ENCODE measurements at regions of chr2 and their contacts with region 1.

Region 1: DNA sequence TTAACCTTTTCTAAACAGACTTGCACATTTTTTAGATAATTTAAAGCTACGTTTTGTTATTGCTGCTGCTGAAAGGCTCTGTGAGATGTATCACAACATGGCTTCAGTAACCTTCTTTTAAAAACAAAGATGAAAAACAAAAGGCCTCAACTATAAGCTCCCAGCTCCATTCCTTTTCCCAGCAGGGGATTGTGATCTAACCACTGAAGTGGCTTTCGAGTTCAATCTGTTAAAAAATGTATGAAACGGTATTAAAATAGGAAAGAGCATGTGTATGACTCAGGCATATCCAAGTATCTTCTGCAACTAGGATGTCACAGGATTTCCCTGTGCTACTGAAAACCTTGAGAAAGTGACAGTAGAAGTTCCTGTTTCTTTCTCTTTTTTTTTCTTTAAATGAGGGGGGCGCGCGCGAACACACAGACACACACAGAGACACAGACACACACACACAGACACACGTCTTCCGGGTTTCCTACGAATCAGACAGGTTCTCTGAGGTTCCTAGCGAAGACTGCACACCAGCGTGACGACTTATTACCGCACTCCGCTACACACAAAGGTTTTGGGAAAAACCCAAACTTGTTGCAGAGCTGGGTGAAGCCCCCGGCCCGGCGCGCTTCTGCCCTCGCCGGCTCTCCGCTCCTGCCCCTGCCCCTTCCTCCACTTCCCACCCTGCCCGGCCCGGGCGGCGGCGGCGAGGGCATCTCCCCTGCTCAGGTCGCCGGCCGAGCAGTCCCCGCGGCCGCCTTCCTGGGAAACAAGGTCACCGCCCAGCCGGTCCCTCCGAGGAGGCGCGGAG is 86.8 kb downstream of the RBMS1 start:
- DNase-seq: peak; percentile 35
- ATAC-seq: peak; percentile 49
- H3K4me3 ChIP-seq: peak overlapping the region; percentile 67 to 87 (median 82)
- H3K27ac ChIP-seq: peak overlapping the region; percentile 17
- H3K4me1 ChIP-seq: peaks cover 56% of the 10 kb centered on the region
- H3K27me3 ChIP-seq: no peaks in the 10 kb centered on the region; a peak in 1 of 5 replicates
- CTCF ChIP-seq: peak; percentile 24; the same call in 1 of the 2 replicates
- EP300 ChIP-seq: no peak
- POLR2A ChIP-seq: 0 out of 4 replicates have a peak, but pooled peaks of 1 of the 2 experiments have one; percentile 27
- RAD21 ChIP-seq: no peak

Region 2: DNA sequence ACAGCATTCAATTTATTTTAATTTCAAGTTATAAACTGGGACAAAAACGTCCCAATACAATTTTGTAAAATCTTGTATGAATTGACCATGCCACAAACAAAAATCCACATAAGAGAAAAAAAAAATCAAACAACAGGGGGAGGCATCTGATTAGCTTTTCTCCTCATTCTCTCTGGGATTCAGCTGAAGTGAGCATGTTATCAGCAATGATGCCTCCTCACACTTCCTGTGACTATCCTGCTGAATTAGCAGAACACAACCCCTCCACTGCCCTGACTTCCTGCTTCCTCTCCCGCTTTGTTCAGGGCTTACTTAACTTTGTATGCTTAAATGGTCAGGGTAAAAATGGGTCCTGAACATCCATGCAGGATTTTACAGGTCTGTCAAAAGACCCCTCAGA is 74.5 kb before region 1 on chr2:
- CTCF ChIA-PET with region 1: no interaction called
- POLR2A ChIA-PET with region 1: no interaction called
- in situ Hi-C with region 1: loop called (anchors 5 kb)
- intact Hi-C with region 1: loop called (anchors 2 kb)
- DNase-seq: no peak
- ATAC-seq: no peak
- H3K4me3 ChIP-seq: no peak overlapping the region
- H3K27ac ChIP-seq: no peak overlapping the region
- H3K4me1 ChIP-seq: peaks cover 20% of the 10 kb centered on the region
- H3K27me3 ChIP-seq: no peaks in the 10 kb centered on the region
- CTCF ChIP-seq: no peak
- EP300 ChIP-seq: no peak
- POLR2A ChIP-seq: no peak
- RAD21 ChIP-seq: no peak

Region 3: DNA sequence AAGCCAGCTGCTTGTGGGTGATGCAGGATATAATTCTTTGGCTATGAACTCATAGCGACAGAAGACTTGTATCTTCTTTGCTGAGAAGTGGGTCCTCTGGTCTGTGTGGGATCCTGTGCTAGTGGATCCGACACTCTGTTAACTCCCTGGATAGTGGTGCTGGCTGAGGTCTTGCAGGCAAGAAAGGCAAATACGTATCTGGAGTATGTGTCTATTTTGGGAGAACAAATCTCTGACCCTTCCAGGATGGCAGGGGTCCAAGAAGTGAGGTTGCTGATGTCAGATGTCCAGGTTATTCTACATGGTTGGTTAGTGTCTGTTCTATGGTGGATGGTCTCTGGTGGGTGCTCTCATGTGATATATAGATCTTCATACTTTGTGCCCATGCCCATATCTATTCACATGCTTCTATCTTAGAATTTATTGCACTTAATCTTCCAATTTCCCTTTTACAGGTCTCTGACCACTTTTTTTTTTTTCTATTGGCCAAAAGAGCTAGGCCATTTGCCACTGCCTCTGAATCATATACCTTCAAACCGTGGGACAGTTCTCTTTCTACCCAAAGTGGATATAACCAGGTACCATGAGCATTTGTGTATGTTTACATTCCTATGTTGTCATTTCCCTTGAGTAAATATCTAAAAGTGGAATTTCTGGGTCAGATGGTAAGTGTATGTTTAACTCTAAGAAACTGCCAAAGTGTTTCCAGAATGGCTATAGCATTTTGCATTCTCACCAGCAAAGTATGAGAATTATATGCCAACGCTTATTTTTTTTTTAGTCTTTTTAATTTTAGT is 132.0 kb after region 1 on chr2:
- CTCF ChIA-PET with region 1: no interaction called
- POLR2A ChIA-PET with region 1: no interaction called
- in situ Hi-C with region 1: no loop called
- intact Hi-C with region 1: loop called (anchors 5 kb)
- DNase-seq: no peak
- ATAC-seq: no peak; the same call in 2 of the 3 replicates
- H3K4me3 ChIP-seq: no peak overlapping the region
- H3K27ac ChIP-seq: no peak overlapping the region
- H3K4me1 ChIP-seq: 0 out of 2 replicates have a peak, but pooled peaks cover 4% of the 10 kb centered on the region
- H3K27me3 ChIP-seq: no peaks in the 10 kb centered on the region
- CTCF ChIP-seq: no peak
- EP300 ChIP-seq: no peak
- POLR2A ChIP-seq: no peak
- RAD21 ChIP-seq: no peak

Region 4: DNA sequence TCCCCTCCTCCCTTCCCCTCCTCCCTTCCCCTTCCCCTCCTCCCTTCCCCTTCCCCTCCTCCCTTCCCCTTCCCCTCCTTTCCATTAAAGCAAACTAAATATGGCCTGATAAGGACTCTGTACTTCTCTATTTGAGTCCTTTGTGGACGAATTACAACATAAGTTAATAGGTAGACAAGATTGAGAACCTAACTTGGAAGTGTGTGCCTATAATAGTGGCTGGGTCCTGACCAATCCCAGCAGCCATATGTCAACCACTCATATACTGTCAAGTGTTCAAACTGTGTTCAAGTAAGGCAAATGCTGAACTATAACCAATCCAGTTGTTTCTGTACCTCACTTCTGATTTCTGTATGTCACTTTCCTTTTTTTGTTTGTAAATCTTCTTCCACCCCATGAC is 183.9 kb after region 1 on chr2:
- CTCF ChIA-PET with region 1: no interaction called
- POLR2A ChIA-PET with region 1: no interaction called
- in situ Hi-C with region 1: no loop called
- intact Hi-C with region 1: loop called (anchors 5 kb)
- DNase-seq: peak; percentile 16
- ATAC-seq: peak; percentile 75
- H3K4me3 ChIP-seq: no peak overlapping the region
- H3K27ac ChIP-seq: no peak overlapping the region
- H3K4me1 ChIP-seq: no peaks in the 10 kb centered on the region; the same call in 1 of the 2 replicates
- H3K27me3 ChIP-seq: no peaks in the 10 kb centered on the region
- CTCF ChIP-seq: no peak
- EP300 ChIP-seq: no peak
- POLR2A ChIP-seq: no peak
- RAD21 ChIP-seq: no peak

Measured in HepG2 (cell line).